MCF 10A (cell line): ENCODE measurements at regions of chr6 and their contacts with region 1.

Region 1: DNA sequence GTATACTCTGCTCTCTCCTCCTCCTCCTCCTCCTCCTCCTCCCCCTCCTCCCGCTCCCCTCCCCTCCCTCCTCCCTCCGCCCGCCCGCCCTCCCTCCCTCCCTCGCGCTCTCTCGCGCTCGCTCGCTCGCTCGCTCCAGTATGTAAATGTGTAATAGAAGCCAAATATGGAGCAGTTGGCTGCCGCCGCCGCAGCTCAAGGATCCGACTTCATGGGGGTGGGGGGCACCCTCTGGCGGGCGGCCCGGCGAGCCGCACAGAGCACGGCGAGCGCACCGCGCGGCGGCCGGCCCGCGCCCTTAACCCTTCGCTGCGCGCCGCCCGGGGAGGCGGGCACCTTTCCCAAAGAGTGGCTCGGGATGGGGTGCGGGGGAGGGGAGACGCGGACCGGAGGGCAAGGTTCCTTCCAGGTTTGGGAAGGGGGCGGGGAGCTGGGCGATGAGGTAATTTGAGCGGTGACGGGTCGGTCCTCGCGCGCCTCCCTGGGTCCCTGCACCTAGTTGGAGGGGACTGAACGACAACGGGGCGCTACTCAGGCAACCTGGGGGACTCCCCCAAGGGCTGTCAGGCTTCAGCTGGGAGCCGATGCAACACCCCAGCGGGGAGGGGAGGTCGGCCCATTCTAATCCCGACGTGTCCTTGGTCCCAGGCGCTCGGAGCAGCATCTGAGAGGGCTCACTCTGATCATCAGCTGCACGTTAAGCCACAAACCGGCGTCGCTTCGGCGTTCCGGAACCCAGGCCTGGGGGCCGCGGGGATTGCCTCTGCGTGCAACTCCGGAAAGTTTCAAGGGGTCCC is 409 bp upstream of the ATXN1 start:
- DNase-seq: peak; percentile 83
- H3K4me3 Mint-ChIP-seq: peak overlapping the region; percentile 90
- H3K27ac Mint-ChIP-seq: peak overlapping the region; percentile 77
- H3K4me1 Mint-ChIP-seq: peaks cover 16% of the 10 kb centered on the region
- H3K27me3 Mint-ChIP-seq: no peaks in the 10 kb centered on the region
- CTCF ChIP-seq: peak; percentile 7

Region 2: DNA sequence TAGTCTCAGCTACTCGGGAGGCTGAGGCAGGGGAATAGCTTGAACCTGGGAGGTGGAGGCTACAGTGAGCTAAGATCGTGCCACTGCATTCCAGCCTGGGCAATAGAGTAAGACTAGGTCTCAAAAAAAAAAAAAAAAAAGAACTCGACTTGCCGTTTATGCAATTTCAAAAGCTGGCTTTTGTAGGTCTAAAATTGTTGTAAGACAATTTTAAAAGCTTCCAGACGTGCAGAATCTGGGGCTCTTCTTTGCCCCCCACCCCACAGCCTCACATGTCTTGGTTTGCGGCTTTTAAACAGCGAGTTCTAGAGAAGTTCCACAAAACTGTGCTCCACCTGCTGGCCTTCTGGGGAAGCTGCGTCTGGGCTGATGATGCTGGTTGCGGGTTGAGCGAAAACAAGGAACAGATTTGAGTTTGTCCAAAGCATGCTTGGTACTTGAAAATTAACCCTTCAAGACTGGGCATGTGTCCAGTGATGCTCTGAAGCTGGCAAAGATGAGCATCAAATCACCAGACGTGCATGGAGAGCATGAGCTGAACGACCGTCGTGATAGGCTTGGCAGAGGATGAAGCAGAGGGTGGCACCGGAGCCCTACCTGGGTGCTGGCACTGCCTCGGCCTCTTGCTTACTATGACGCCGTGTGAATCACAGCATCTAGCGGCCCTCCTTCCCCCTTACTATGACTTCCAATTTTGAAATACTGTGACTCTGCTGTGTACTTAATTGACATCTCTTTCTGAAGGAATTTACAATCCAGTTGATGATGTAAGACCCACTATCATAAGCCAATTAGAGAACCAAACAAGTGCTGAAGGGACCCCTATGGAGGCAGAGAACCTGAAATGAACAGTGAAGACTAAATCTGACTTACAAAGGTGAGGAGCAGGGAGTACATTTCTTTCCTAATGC is 351.9 kb before region 1 on chr6:
- CTCF ChIA-PET with region 1: interaction called, 4 read pairs
- POLR2A ChIA-PET with region 1: interaction called, 4 read pairs
- intact Hi-C with region 1: loop called (anchors 10 kb)
- DNase-seq: peak; percentile 59
- H3K4me3 Mint-ChIP-seq: no peak overlapping the region
- H3K27ac Mint-ChIP-seq: no peak overlapping the region
- H3K4me1 Mint-ChIP-seq: no peaks in the 10 kb centered on the region
- H3K27me3 Mint-ChIP-seq: no peaks in the 10 kb centered on the region
- CTCF ChIP-seq: peak; percentile 53

Region 3: DNA sequence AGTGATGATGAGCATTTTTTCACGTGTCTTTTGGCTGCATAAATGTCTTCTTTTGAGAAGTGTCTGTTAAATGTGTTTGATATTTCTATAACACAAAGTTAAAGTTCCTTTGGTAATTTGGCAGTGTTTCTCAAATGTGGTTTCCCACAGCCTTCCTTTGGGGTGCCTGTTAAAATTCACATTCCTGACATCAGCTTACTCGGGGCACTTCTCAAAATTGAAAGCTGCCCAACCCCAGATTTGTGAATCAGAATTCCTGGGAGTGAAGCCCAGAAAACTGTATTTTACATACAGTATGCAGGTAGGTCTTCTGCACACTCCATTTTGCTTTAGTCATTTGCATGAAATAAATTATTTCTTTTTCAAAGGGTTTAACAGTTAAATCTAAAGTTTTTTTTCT is 315.4 kb before region 1 on chr6:
- CTCF ChIA-PET with region 1: no interaction called
- POLR2A ChIA-PET with region 1: no interaction called
- intact Hi-C with region 1: no loop called
- DNase-seq: no peak
- H3K4me3 Mint-ChIP-seq: no peak overlapping the region
- H3K27ac Mint-ChIP-seq: no peak overlapping the region
- H3K4me1 Mint-ChIP-seq: no peaks in the 10 kb centered on the region
- H3K27me3 Mint-ChIP-seq: no peaks in the 10 kb centered on the region
- CTCF ChIP-seq: no peak

Region 4: DNA sequence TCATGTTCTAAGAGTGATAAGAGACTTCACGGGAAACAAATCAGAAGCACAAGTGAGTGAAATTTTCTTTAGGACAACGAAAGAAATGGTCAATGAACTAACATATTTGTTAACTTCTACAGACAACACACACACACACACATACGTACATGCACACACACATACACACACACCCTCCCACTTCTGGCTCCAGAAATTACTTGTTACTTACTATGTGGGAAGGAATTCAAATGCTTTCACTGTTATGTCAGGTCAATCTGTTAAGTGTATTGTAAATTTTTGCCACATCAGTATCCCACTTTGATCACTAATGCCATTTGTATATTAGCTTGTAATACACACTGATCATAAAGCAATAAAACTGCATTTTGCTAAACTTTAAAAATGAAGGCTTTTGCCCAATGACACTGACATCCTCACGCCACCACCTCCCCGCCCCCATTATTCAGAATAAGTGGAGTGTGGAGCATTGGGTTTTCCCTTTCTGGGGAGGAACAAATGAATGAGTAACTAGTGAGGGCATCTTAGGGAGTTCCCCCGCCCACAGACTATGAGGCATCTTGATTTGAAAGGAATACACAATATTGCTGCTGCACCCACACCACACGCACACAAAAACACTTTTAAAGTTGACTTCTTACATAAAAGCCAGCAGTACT is 76.6 kb before region 1 on chr6:
- CTCF ChIA-PET with region 1: interaction called, 7 read pairs
- POLR2A ChIA-PET with region 1: interaction called, 49 read pairs
- intact Hi-C with region 1: loop called (anchors 2 kb)
- DNase-seq: peak; percentile 85
- H3K4me3 Mint-ChIP-seq: no peak overlapping the region
- H3K27ac Mint-ChIP-seq: no peak overlapping the region
- H3K4me1 Mint-ChIP-seq: peaks cover 48% of the 10 kb centered on the region
- H3K27me3 Mint-ChIP-seq: no peaks in the 10 kb centered on the region
- CTCF ChIP-seq: no peak

Region 5: DNA sequence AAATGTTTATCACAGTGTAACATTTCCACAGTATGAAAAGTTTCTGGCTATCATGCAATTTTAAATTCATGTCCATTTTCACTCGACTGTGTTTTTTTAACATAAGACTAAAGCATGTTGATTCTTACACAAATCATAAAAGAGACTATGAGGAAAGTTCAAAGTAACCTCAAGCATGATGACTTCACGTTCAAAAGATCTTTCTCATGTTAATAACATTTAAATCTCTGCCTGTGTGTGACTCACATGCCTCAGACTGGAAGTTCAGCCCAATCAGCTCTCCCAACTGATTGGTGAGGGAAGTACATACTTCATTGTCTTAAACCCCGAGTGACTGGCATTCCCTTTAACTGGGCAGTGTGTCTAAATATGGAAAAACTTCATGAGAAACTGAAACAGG is 37.8 kb before region 1 on chr6:
- CTCF ChIA-PET with region 1: interaction called, 30 read pairs
- POLR2A ChIA-PET with region 1: interaction called, 80 read pairs
- intact Hi-C with region 1: loop called (anchors 5 kb)
- DNase-seq: peak; percentile 88
- H3K4me3 Mint-ChIP-seq: peak overlapping the region; percentile 47
- H3K27ac Mint-ChIP-seq: peak overlapping the region; percentile 87
- H3K4me1 Mint-ChIP-seq: peaks cover 37% of the 10 kb centered on the region
- H3K27me3 Mint-ChIP-seq: no peaks in the 10 kb centered on the region
- CTCF ChIP-seq: no peak

Region 6: GRCh38 chr6:16819752-16820151 is 58.1 kb after region 1 on chr6:
- CTCF ChIA-PET with region 1: interaction called, 5 read pairs
- POLR2A ChIA-PET with region 1: interaction called, 4 read pairs
- intact Hi-C with region 1: loop called (anchors 1 kb)
- DNase-seq: peak; percentile 36
- H3K4me3 Mint-ChIP-seq: no peak overlapping the region
- H3K27ac Mint-ChIP-seq: no peak overlapping the region
- H3K4me1 Mint-ChIP-seq: peaks cover 10% of the 10 kb centered on the region
- H3K27me3 Mint-ChIP-seq: no peaks in the 10 kb centered on the region
- CTCF ChIP-seq: peak; percentile 31

Region 7: GRCh38 chr6:16894301-16894700 is 132.6 kb after region 1 on chr6:
- CTCF ChIA-PET with region 1: no interaction called
- POLR2A ChIA-PET with region 1: no interaction called
- intact Hi-C with region 1: no loop called
- DNase-seq: no peak
- H3K4me3 Mint-ChIP-seq: no peak overlapping the region
- H3K27ac Mint-ChIP-seq: no peak overlapping the region
- H3K4me1 Mint-ChIP-seq: peaks cover 7% of the 10 kb centered on the region
- H3K27me3 Mint-ChIP-seq: no peaks in the 10 kb centered on the region
- CTCF ChIP-seq: no peak

Region 8: GRCh38 chr6:17086469-17086868 is 324.8 kb after region 1 on chr6:
- CTCF ChIA-PET with region 1: interaction called, 34 read pairs
- POLR2A ChIA-PET with region 1: interaction called, 6 read pairs
- intact Hi-C with region 1: loop called (anchors 5 kb)
- DNase-seq: peak; percentile 76
- H3K4me3 Mint-ChIP-seq: no peak overlapping the region
- H3K27ac Mint-ChIP-seq: no peak overlapping the region
- H3K4me1 Mint-ChIP-seq: no peaks in the 10 kb centered on the region
- H3K27me3 Mint-ChIP-seq: no peaks in the 10 kb centered on the region
- CTCF ChIP-seq: peak; percentile 57

Region 9: DNA sequence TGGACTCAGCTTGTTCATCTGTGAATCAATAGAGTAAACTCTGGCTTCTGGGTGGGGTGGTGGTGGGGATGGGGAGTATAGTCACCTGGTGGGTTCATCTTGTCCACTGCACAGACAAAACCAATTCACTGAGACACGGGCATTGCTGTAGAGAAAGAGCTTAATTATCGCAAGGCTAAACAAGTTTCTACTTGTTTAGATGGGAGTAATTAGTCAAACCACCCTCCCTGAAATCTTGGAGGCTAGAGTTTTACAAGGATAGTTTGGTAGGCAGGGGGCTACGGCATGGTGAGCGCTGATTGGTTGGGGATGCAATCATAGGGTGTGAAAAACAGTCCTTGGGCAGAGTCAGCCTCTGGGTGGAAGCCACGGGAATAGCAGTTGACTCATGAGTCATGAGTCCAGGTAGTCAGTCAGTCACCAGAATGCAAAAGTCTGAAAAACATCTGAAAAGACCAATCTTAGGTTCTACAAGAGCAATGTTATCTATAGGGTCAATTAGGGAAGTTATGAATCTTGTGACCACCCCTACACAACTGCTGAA is 417.9 kb after region 1 on chr6:
- CTCF ChIA-PET with region 1: no interaction called
- POLR2A ChIA-PET with region 1: no interaction called
- intact Hi-C with region 1: no loop called
- DNase-seq: peak; percentile 18
- H3K4me3 Mint-ChIP-seq: no peak overlapping the region
- H3K27ac Mint-ChIP-seq: peak overlapping the region; percentile 88
- H3K4me1 Mint-ChIP-seq: peaks cover 7% of the 10 kb centered on the region
- H3K27me3 Mint-ChIP-seq: no peaks in the 10 kb centered on the region
- CTCF ChIP-seq: no peak